B cell (primary cell): ENCODE measurements at regions of chr6 and their contacts with region 1.

Region 1: DNA sequence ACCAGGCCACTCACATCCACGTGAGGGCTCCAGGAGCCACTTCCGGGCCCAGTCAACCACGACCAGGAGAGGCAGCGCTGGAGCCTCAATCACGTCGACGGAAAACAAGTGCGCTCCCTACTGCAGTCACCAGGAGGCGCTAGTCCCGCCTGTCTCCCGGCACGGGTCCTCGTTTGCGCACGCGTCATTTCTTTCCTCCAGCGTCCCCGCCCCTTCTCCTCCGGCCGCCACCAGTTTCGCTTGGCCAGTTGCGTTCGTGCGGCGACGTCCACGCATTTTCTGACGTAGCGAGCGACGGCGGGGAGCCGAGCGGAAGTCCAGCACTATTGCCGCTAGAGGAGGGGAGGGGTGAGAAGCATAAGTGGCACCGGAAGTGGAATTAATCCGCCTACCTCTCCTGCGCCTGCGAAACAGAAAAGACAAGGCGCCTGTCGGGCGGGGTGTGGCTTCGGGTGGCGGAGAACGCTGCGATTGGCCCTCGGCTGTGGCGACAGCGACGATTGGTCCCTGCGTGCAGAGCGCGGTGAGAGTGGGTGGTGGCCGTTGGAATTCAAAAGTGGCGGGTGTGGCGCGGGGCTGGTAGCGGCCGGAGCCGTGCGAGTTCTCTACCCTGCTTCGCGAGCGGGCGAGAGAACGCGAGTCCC is at the start of gene KIFC1:
- DNase-seq: peak; percentile 100
- ATAC-seq: peak; percentile 85
- H3K4me3 ChIP-seq: peak within 1 kb of the TSS; percentile 54 to 73 (median 59)
- H3K4me3 Mint-ChIP-seq: peak within 1 kb of the TSS; percentile 80
- H3K27ac ChIP-seq: peak within 1 kb of the TSS; percentile 88
- H3K27ac Mint-ChIP-seq: peak within 1 kb of the TSS; percentile 95
- H3K4me1 ChIP-seq: peaks cover 12 to 18% of the 10 kb centered on the region in 2 donors
- H3K4me1 Mint-ChIP-seq: peaks cover 23% of the 10 kb centered on the region
- H3K27me3 ChIP-seq: no peaks in the 10 kb centered on the region
- H3K27me3 Mint-ChIP-seq: no peaks in the 10 kb centered on the region
- CTCF ChIP-seq: peak; percentile 88
- total RNA-seq, gene KIFC1: 0.70 and 0.79 TPM in 2 replicates

Region 2: GRCh38 chr6:33299237-33299944 is 92.0 kb before region 1 on chr6:
- CTCF ChIA-PET with region 1: interaction called, 5 read pairs
- POLR2A ChIA-PET with region 1: no interaction called
- intact Hi-C with region 1: loop called (anchors 1 kb)
- DNase-seq: peak; percentile 95
- ATAC-seq: peak; percentile 68
- H3K4me3 ChIP-seq: peak overlapping the region; percentile 71 to 96 (median 79)
- H3K4me3 Mint-ChIP-seq: peak overlapping the region; percentile 99
- H3K27ac ChIP-seq: peak overlapping the region; percentile 86 to 91
- H3K27ac Mint-ChIP-seq: peak overlapping the region; percentile 99
- H3K4me1 ChIP-seq: peaks cover 12 to 24% of the 10 kb centered on the region in 2 donors
- H3K4me1 Mint-ChIP-seq: peaks cover 38% of the 10 kb centered on the region
- H3K27me3 ChIP-seq: no peaks in the 10 kb centered on the region
- H3K27me3 Mint-ChIP-seq: no peaks in the 10 kb centered on the region
- CTCF ChIP-seq: peak; percentile 69

Region 3: GRCh38 chr6:33410050-33410710 is 18.8 kb after region 1 on chr6:
- CTCF ChIA-PET with region 1: interaction called, 6 read pairs
- POLR2A ChIA-PET with region 1: interaction called, 4 read pairs
- intact Hi-C with region 1: loop called (anchors 1 kb)
- DNase-seq: peak; percentile 98
- ATAC-seq: peak; percentile 74
- H3K4me3 ChIP-seq: peak overlapping the region; percentile 63 to 91 (median 84)
- H3K4me3 Mint-ChIP-seq: peak overlapping the region; percentile 87
- H3K27ac ChIP-seq: peak overlapping the region; percentile 96 to 98
- H3K27ac Mint-ChIP-seq: peak overlapping the region; percentile 94
- H3K4me1 ChIP-seq: peaks cover 37 to 52% of the 10 kb centered on the region in 2 donors
- H3K4me1 Mint-ChIP-seq: peaks cover 47% of the 10 kb centered on the region
- H3K27me3 ChIP-seq: no peaks in the 10 kb centered on the region
- H3K27me3 Mint-ChIP-seq: no peaks in the 10 kb centered on the region
- CTCF ChIP-seq: no peak

Region 4: GRCh38 chr6:33454009-33454946 is 62.9 kb after region 1 on chr6 and contains the start of gene ZBTB9:
- CTCF ChIA-PET with region 1: interaction called, 8 read pairs
- POLR2A ChIA-PET with region 1: interaction called, 16 read pairs
- intact Hi-C with region 1: no loop called
- DNase-seq: peak; percentile 94
- ATAC-seq: peak; percentile 100
- H3K4me3 ChIP-seq: peak within 1 kb of the TSS; percentile 77 to 94 (median 81)
- H3K4me3 Mint-ChIP-seq: peak within 1 kb of the TSS; percentile 99
- H3K27ac ChIP-seq: peak within 1 kb of the TSS; percentile 57 to 84
- H3K27ac Mint-ChIP-seq: peak within 1 kb of the TSS; percentile 93
- H3K4me1 ChIP-seq: peaks cover 12 to 21% of the 10 kb centered on the region in 2 donors
- H3K4me1 Mint-ChIP-seq: peaks cover 32% of the 10 kb centered on the region
- H3K27me3 ChIP-seq: no peaks in the 10 kb centered on the region
- H3K27me3 Mint-ChIP-seq: no peaks in the 10 kb centered on the region
- CTCF ChIP-seq: no peak
- total RNA-seq, gene ZBTB9: 10.4 and 11.8 TPM in 2 replicates

Region 5: DNA sequence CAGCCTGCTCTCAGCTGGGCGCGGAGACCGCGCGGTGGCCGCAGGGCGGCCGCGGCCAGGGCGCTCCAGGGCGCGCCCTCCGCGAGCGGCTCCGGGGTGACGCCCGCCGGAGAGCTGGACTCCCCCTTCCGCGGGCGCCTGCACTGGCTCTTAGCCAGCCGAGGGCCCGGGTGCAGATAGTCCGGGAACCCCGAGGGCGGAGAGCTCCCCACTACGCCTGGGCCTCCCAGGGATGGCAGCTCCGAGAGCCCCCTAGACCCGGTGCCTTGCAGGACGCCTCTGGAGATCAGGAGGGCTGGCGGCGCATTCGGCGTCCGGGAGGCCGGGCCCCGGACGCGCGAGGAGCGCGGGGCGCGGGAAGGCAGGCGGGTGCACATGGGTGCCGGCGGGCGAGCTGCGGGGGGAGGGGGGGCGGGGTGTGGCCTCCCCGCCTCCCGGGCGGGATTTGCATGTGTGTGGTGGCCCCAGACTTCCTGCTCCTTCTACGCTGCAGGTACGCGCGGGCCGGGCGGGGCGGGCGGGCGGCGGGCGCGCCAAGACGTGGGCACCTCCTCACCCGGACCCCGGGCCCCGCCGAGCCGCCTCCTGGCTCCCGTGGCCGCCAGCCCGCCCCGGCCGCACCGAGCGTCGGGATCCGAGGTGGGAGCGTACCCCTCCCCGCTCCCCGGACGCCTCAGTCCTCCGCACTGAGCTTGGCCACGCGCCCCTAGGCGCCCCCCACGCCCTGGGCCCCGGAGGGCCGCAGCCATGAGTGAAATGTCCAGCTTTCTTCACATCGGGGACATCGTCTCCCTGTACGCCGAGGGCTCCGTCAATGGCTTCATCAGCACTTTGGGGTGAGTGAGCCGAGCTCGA is 229.7 kb after region 1 on chr6 and contains the start of gene ITPR3:
- CTCF ChIA-PET with region 1: no interaction called
- POLR2A ChIA-PET with region 1: no interaction called
- intact Hi-C with region 1: loop called (anchors 5 kb)
- DNase-seq: peak; percentile 93
- ATAC-seq: peak; percentile 88
- H3K4me3 ChIP-seq: peak within 1 kb of the TSS; percentile 70 to 98 (median 95)
- H3K4me3 Mint-ChIP-seq: peak within 1 kb of the TSS; percentile 95
- H3K27ac ChIP-seq: peak within 1 kb of the TSS; percentile 80 to 92
- H3K27ac Mint-ChIP-seq: peak within 1 kb of the TSS; percentile 87
- H3K4me1 ChIP-seq: peaks cover 20 to 30% of the 10 kb centered on the region in 2 donors
- H3K4me1 Mint-ChIP-seq: peaks cover 49% of the 10 kb centered on the region
- H3K27me3 ChIP-seq: no peaks in the 10 kb centered on the region
- H3K27me3 Mint-ChIP-seq: no peaks in the 10 kb centered on the region
- CTCF ChIP-seq: no peak
- total RNA-seq, gene ITPR3: 61.9 and 62.4 TPM in 2 replicates